Activated B cell treated with CpG ODN at 0.5 μM for 24 hours (primary cell): ENCODE measurements at regions of chr7 and their contacts with region 1.

Region 1: GRCh38 chr7:107125458-107125857 is 43.3 kb upstream of the HBP1 start:
- DNase-seq: no peak
- ATAC-seq: no peak
- H3K4me3 Mint-ChIP-seq: peak overlapping the region; percentile 71
- H3K27ac Mint-ChIP-seq: peak overlapping the region; percentile 73
- H3K4me1 Mint-ChIP-seq: peaks cover 16% of the 10 kb centered on the region
- H3K27me3 Mint-ChIP-seq: no peaks in the 10 kb centered on the region
- CTCF ChIP-seq: no peak

Region 2: DNA sequence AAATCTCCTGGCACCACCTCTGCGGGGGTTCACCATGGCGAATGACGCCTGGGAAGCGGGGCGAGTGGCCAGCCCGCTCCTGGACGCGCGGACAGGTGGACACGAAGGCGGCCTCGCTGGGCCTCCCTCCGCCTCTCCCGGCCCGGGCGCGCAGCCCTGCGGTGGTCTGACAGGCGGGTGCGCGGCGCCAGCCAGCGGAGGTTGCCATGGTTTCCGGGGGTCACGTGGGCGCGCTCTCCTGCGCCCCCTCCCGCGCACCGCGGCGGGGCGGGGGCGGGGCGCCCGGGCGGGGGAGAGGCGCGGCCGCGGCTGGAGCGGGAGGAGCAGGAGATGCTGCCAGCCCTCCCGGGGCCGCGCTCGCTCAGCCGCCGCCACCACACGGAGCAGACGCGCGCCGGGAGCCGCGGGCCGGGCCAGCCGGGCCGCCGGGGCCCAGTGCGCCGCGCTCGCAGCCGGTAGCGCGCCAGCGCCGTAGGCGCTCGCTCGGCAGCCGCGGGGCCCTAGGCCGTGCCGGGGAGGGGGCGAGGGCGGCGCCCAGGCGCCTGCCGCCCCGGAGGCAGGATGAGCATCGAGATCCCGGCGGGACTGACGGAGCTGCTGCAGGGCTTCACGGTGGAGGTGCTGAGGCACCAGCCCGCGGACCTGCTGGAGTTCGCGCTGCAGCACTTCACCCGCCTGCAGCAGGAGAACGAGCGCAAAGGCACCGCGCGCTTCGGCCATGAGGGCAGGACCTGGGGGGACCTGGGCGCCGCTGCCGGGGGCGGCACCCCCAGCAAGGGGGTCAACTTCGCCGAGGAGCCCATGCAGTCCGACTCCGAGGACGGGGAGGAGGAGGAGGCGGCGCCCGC is 80.9 kb before region 1 on chr7 and contains the start of gene PRKAR2B:
- CTCF ChIA-PET with region 1: no interaction called
- POLR2A ChIA-PET with region 1: no interaction called
- intact Hi-C with region 1: loop called (anchors 5 kb)
- DNase-seq: peak; percentile 70
- ATAC-seq: peak; percentile 90
- H3K4me3 Mint-ChIP-seq: peak within 1 kb of the TSS; percentile 86
- H3K27ac Mint-ChIP-seq: no peak within 1 kb of the TSS
- H3K4me1 Mint-ChIP-seq: peaks cover 9% of the 10 kb centered on the region
- H3K27me3 Mint-ChIP-seq: peaks cover 26% of the 10 kb centered on the region
- CTCF ChIP-seq: no peak
- total RNA-seq, gene PRKAR2B: 0.64 and 0.71 TPM in 2 replicates